CD8-positive, alpha-beta T cell (primary cell): ENCODE measurements at regions of chr9 and their contacts with region 1.

Region 1: GRCh38 chr9:128067876-128068613 is at the start of gene SLC25A25:
- DNase-seq: peak; percentile 100
- ATAC-seq: peak; percentile 85
- H3K4me3 ChIP-seq: peak within 1 kb of the TSS; percentile 84 to 87
- H3K4me3 Mint-ChIP-seq: no peak within 1 kb of the TSS
- H3K27ac ChIP-seq: peak within 1 kb of the TSS; percentile 60 to 99
- H3K27ac Mint-ChIP-seq: peak within 1 kb of the TSS; percentile 93
- H3K4me1 ChIP-seq: peaks cover 62% of the 10 kb centered on the region
- H3K4me1 Mint-ChIP-seq: peaks cover 60% of the 10 kb centered on the region
- H3K27me3 ChIP-seq: no peaks in the 10 kb centered on the region
- H3K27me3 Mint-ChIP-seq: no peaks in the 10 kb centered on the region
- CTCF ChIP-seq: no peak
- total RNA-seq, gene SLC25A25: 12.1 to 12.2 TPM

Region 2: GRCh38 chr9:127244609-127245601 is 823.1 kb before region 1 on chr9:
- CTCF ChIA-PET with region 1: no interaction called
- POLR2A ChIA-PET with region 1: no interaction called
- intact Hi-C with region 1: loop called in 1 of 2 experiments (anchors 10 kb)
- DNase-seq: peak; percentile 88 to 96 (median 94)
- ATAC-seq: peak; percentile 100
- H3K4me3 ChIP-seq: peak overlapping the region; percentile 57 to 76
- H3K4me3 Mint-ChIP-seq: peak overlapping the region; percentile 86
- H3K27ac ChIP-seq: peak overlapping the region in 1 of 2 experiments; percentile 12
- H3K27ac Mint-ChIP-seq: no peak overlapping the region
- H3K4me1 ChIP-seq: peaks cover 6% of the 10 kb centered on the region
- H3K4me1 Mint-ChIP-seq: peaks cover 15% of the 10 kb centered on the region
- H3K27me3 ChIP-seq: no peaks in the 10 kb centered on the region
- H3K27me3 Mint-ChIP-seq: peaks cover 7% of the 10 kb centered on the region
- CTCF ChIP-seq: no peak

Region 3: GRCh38 chr9:127802576-127803443 is 265.2 kb before region 1 on chr9 and contains the start of gene FPGS:
- CTCF ChIA-PET with region 1: no interaction called
- POLR2A ChIA-PET with region 1: no interaction called
- intact Hi-C with region 1: loop called in 1 of 2 experiments (anchors 5 kb)
- DNase-seq: peak; percentile 57 to 92 (median 81)
- ATAC-seq: peak; percentile 87
- H3K4me3 ChIP-seq: peak within 1 kb of the TSS; percentile 95 to 98
- H3K4me3 Mint-ChIP-seq: peak within 1 kb of the TSS; percentile 92
- H3K27ac ChIP-seq: peak within 1 kb of the TSS; percentile 89
- H3K27ac Mint-ChIP-seq: peak within 1 kb of the TSS; percentile 87
- H3K4me1 ChIP-seq: peaks cover 21% of the 10 kb centered on the region
- H3K4me1 Mint-ChIP-seq: peaks cover 38% of the 10 kb centered on the region
- H3K27me3 ChIP-seq: no peaks in the 10 kb centered on the region
- H3K27me3 Mint-ChIP-seq: no peaks in the 10 kb centered on the region
- CTCF ChIP-seq: no peak
- total RNA-seq, gene FPGS: 91.9 to 95.3 TPM

Region 4: GRCh38 chr9:128026773-128027541 is 41.1 kb before region 1 on chr9:
- CTCF ChIA-PET with region 1: interaction called, 3 read pairs
- POLR2A ChIA-PET with region 1: interaction called, 5 read pairs
- intact Hi-C with region 1: loop called in 1 of 2 experiments (anchors 2 kb)
- DNase-seq: peak in 7 of 9 experiments; percentile 30 to 85 (median 71)
- ATAC-seq: peak; percentile 21
- H3K4me3 ChIP-seq: peak overlapping the region; percentile 7 to 28
- H3K4me3 Mint-ChIP-seq: peak overlapping the region; percentile 76
- H3K27ac ChIP-seq: peak overlapping the region; percentile 76 to 98
- H3K27ac Mint-ChIP-seq: peak overlapping the region; percentile 99
- H3K4me1 ChIP-seq: peaks cover 86% of the 10 kb centered on the region
- H3K4me1 Mint-ChIP-seq: peaks cover 86% of the 10 kb centered on the region
- H3K27me3 ChIP-seq: no peaks in the 10 kb centered on the region
- H3K27me3 Mint-ChIP-seq: no peaks in the 10 kb centered on the region
- CTCF ChIP-seq: no peak

Region 5: GRCh38 chr9:128117613-128118471 is 49.8 kb after region 1 on chr9:
- CTCF ChIA-PET with region 1: interaction called, 44 read pairs
- POLR2A ChIA-PET with region 1: no interaction called
- intact Hi-C with region 1: no loop called
- DNase-seq: peak; percentile 93 to 100 (median 96)
- ATAC-seq: peak; percentile 96
- H3K4me3 ChIP-seq: no peak overlapping the region
- H3K4me3 Mint-ChIP-seq: no peak overlapping the region
- H3K27ac ChIP-seq: no peak overlapping the region
- H3K27ac Mint-ChIP-seq: no peak overlapping the region
- H3K4me1 ChIP-seq: peaks cover 6% of the 10 kb centered on the region
- H3K4me1 Mint-ChIP-seq: peaks cover 5% of the 10 kb centered on the region
- H3K27me3 ChIP-seq: no peaks in the 10 kb centered on the region
- H3K27me3 Mint-ChIP-seq: no peaks in the 10 kb centered on the region
- CTCF ChIP-seq: peak; percentile 100

Region 6: DNA sequence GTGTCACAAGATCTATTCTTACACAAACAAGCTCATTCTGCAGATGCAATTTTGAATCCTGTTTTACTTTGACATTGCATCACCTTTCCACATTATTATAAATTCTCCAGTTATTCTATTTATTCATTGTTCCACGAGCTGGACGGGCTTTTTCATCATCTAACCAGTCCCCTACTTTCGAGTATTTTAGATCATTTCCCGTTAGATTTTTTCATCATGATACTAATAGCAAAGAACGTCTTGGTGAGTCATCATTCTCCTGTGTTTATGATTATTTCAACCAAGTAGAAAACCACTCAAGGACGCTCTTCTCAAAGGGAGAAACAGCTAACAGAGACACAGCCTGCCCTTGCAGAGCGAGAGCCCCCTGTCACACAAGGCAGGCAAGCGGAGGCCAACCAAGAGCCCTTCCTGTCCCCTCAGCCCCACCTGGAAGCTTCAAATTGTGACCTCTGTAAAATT is 107.1 kb after region 1 on chr9:
- CTCF ChIA-PET with region 1: no interaction called
- POLR2A ChIA-PET with region 1: no interaction called
- intact Hi-C with region 1: no loop called
- DNase-seq: no peak
- ATAC-seq: no peak
- H3K4me3 ChIP-seq: no peak overlapping the region
- H3K4me3 Mint-ChIP-seq: no peak overlapping the region
- H3K27ac ChIP-seq: no peak overlapping the region
- H3K27ac Mint-ChIP-seq: no peak overlapping the region
- H3K4me1 ChIP-seq: no peaks in the 10 kb centered on the region
- H3K4me1 Mint-ChIP-seq: no peaks in the 10 kb centered on the region
- H3K27me3 ChIP-seq: no peaks in the 10 kb centered on the region
- H3K27me3 Mint-ChIP-seq: no peaks in the 10 kb centered on the region
- CTCF ChIP-seq: no peak

Region 7: GRCh38 chr9:128249908-128250838 is 182.1 kb after region 1 on chr9:
- CTCF ChIA-PET with region 1: no interaction called
- POLR2A ChIA-PET with region 1: no interaction called
- intact Hi-C with region 1: loop called in 1 of 2 experiments (anchors 1 kb)
- DNase-seq: peak; percentile 95 to 100 (median 99)
- ATAC-seq: peak; percentile 95
- H3K4me3 ChIP-seq: peak overlapping the region; percentile 52 to 97
- H3K4me3 Mint-ChIP-seq: peak overlapping the region; percentile 86
- H3K27ac ChIP-seq: peak overlapping the region; percentile 52 to 86
- H3K27ac Mint-ChIP-seq: peak overlapping the region; percentile 97
- H3K4me1 ChIP-seq: peaks cover 22% of the 10 kb centered on the region
- H3K4me1 Mint-ChIP-seq: peaks cover 18% of the 10 kb centered on the region
- H3K27me3 ChIP-seq: no peaks in the 10 kb centered on the region
- H3K27me3 Mint-ChIP-seq: peaks cover 5% of the 10 kb centered on the region
- CTCF ChIP-seq: no peak